ENCODE measurements at regions of chr7 and their contacts with region 1.

Region 1: GRCh38 chr7:55192718-55193117 is 172.4 kb upstream of the LANCL2 start:
- DNase-seq: peak; percentile 74
- H3K4me3 ChIP-seq: no peak overlapping the region
- H3K27ac ChIP-seq: peak overlapping the region; percentile 91 to 95
- H3K4me1 ChIP-seq: peaks cover 45 to 48% of the 10 kb centered on the region in 2 experiments
- H3K27me3 ChIP-seq: no peaks in the 10 kb centered on the region
- CTCF ChIP-seq: no peak
- EP300 ChIP-seq: peak; percentile 99 to 100
- RAD21 ChIP-seq: no peak; the same call in 1 of the 2 replicates

Region 2: DNA sequence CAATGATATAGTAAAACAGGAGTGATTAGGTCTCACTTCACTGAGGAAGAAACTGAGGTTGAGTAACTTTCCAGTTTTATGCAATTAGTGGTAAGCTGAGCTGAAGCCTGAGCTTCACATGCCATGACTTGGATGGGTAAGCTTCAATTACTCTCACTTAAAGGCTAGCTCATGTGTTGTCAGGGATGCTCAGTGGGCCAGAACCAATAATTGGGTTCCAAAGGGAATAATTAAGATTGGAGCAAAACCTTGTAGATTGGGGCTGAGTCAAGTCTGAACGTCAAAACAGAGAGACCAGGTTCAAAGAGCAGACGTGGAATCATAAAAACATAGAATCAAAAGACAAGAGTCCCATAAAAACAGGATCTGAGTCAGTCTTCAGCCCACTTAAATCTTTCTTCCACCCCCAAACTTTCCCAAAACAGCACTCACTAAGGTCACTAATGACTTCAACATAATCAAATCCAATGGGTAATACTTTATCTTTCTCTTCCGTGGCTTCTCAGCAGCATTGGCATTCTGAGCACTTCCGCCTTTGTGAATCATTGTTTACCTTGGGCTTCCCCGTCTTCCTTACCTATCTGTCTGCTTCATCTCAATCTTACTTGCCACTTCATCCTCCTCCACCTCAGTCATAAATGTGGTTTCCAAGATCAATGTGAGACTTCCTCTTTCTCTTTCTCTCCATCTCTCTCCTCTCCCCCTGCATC is 196.9 kb before region 1 on chr7:
- CTCF ChIA-PET with region 1: no interaction called
- POLR2A ChIA-PET with region 1: no interaction called
- DNase-seq: no peak
- H3K4me3 ChIP-seq: no peak overlapping the region
- H3K27ac ChIP-seq: peak overlapping the region in 1 of 2 experiments; percentile 78; a peak in 2 of 4 replicates
- H3K4me1 ChIP-seq: peaks cover 0 to 22% of the 10 kb centered on the region in 2 experiments; a peak in 2 of 4 replicates
- H3K27me3 ChIP-seq: no peaks in the 10 kb centered on the region
- CTCF ChIP-seq: no peak
- EP300 ChIP-seq: peak in 1 of 2 experiments; percentile 97; a peak in 3 of 4 replicates
- RAD21 ChIP-seq: no peak

Region 3: GRCh38 chr7:55100544-55101301 is 92.0 kb before region 1 on chr7:
- CTCF ChIA-PET with region 1: no interaction called
- POLR2A ChIA-PET with region 1: no interaction called
- DNase-seq: no peak
- H3K4me3 ChIP-seq: no peak overlapping the region
- H3K27ac ChIP-seq: no peak overlapping the region
- H3K4me1 ChIP-seq: peaks cover 22 to 34% of the 10 kb centered on the region in 2 experiments
- H3K27me3 ChIP-seq: no peaks in the 10 kb centered on the region
- CTCF ChIP-seq: no peak
- EP300 ChIP-seq: no peak
- RAD21 ChIP-seq: no peak

Region 4: DNA sequence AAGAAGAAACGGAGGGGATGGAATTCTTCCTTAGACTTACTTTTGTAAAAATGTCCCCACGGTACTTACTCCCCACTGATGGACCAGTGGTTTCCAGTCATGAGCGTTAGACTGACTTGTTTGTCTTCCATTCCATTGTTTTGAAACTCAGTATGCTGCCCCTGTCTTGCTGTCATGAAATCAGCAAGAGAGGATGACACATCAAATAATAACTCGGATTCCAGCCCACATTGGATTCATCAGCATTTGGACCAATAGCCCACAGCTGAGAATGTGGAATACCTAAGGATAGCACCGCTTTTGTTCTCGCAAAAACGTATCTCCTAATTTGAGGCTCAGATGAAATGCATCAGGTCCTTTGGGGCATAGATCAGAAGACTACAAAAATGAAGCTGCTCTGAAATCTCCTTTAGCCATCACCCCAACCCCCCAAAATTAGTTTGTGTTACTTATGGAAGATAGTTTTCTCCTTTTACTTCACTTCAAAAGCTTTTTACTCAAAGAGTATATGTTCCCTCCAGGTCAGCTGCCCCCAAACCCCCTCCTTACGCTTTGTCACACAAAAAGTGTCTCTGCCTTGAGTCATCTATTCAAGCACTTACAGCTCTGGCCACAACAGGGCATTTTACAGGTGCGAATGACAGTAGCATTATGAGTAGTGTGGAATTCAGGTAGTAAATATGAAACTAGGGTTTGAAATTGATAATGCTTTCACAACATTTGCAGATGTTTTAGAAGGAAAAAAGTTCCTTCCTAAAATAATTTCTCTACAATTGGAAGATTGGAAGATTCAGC is 13.7 kb after region 1 on chr7:
- CTCF ChIA-PET with region 1: interaction called, 18 read pairs
- POLR2A ChIA-PET with region 1: no interaction called
- DNase-seq: no peak
- H3K4me3 ChIP-seq: no peak overlapping the region
- H3K27ac ChIP-seq: no peak overlapping the region
- H3K4me1 ChIP-seq: peaks cover 2 to 8% of the 10 kb centered on the region in 2 experiments; a peak in 2 of 4 replicates
- H3K27me3 ChIP-seq: no peaks in the 10 kb centered on the region
- CTCF ChIP-seq: no peak
- EP300 ChIP-seq: no peak
- RAD21 ChIP-seq: no peak

Region 5: DNA sequence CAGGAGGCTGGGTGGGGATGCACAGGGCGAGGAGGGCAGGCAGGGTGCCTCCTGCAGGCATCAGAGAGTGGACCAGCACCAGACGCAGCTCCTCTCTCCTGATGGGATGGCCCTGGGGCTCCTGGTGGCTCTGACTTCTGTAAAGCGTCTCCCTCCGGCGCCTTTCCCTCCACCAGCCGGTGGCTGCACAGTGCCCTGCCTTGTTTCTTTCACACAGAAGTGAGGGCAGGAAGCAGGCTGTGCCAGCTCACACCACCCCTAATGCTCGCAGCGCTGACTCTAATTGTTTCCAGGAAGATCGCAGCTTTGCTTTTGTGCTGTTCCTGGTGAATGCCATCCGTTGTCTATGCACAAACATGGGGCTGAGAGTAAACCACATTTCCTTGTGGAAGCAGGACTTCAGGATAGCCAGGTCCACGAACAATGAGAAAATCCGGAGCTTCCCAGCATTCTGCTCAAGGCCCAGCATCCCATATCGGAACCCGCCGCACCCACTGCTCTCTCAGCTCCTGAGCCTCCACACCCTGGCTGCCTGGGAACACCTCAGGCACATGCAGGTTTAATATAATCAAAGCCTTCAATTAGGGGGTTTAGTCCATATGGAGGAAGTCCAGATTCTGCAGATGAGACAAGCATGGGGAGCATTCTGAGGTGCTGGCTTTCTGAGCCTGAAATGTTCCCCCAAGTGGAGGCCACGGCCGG is 20.3 kb after region 1 on chr7:
- CTCF ChIA-PET with region 1: interaction called, 18 read pairs
- POLR2A ChIA-PET with region 1: interaction called, 14 read pairs
- DNase-seq: peak; percentile 74
- H3K4me3 ChIP-seq: no peak overlapping the region
- H3K27ac ChIP-seq: peak overlapping the region in 1 of 2 experiments; percentile 64; a peak in 2 of 4 replicates
- H3K4me1 ChIP-seq: peaks cover 7 to 32% of the 10 kb centered on the region in 2 experiments; a peak in 3 of 4 replicates
- H3K27me3 ChIP-seq: no peaks in the 10 kb centered on the region
- CTCF ChIP-seq: no peak
- EP300 ChIP-seq: peak in 1 of 2 experiments; percentile 77; a peak in 1 of 4 replicates
- RAD21 ChIP-seq: peak; percentile 31; the same call in 1 of the 2 replicates